Gastrocnemius medialis (tissue), 4 donors: ENCODE measurements at regions of chr12 and their contacts with region 1.

Region 1: DNA sequence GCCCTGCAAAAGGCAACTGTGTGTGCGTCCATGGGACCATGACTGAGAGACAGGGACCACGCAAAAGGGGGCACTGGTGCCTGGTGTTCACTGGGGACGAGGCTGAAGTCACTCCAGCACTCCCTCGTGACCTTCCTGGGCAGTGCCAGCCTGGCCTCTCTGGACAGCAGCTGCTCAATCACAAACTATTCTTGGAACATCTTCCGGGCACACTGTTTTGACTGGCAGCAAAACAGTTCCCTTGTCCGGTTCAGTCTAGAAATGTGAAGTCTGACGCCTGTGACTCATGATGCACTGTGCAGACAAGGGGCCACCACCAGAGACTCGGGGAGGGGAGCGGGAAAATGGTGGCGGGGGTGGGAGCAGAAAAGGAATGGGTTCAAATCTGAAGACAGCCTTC is 20.8 kb downstream of the SNRNP35 start:
- DNase-seq: peak; percentile 91 to 95
- ATAC-seq: peak; percentile 83 to 87
- H3K4me3 ChIP-seq: peak overlapping the region; percentile 17 to 45 (median 30)
- H3K27ac ChIP-seq: peak overlapping the region; percentile 96 to 99 (median 98)
- H3K4me1 ChIP-seq: peaks cover 38 to 48% of the 10 kb centered on the region in 2 donors
- H3K27me3 ChIP-seq: no peaks in the 10 kb centered on the region
- CTCF ChIP-seq: peak in 1 of 5 experiments; percentile 10
- POLR2A ChIP-seq: peak; percentile 26 to 47

Region 2: DNA sequence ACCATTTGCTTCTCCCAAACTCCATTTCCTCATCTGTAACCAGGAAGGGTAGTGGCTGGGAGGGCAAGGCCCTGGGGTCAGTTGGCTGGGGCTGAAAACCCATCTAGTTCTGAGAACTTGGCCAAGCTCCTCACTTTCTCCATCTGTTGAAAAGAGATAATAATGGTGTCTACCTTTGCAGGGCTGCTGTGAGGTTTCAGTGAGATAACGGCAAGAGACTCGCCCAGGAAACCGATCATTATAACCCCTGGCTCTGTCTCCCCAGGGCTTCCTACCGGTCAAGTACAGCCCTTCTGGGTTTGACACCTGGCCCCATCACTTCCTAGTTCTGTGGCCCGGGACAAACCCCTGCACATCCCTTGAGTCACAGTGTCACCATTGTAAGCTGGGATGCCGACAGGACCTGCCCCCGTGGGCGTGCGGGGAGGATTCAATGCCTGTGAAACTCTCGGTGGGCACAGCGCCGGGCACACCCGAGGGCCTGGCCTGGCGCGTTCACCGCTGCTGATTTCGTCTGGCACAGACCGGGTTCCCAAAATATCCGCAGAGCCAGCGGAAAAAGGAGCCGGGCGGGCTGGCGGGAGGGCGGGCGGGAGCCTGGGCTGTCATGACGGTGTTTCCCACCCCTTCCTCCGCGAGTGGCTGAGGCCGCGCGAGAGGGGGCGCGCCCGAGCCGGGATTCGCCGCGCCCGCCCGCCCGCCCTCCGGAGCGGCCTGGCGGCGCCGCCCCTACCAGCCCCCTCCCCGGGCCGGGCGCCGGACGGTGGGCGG is 90.4 kb before region 1 on chr12:
- in situ Hi-C with region 1: no loop called
- intact Hi-C with region 1: loop called (anchors 2 kb)
- DNase-seq: peak; percentile 63 to 77
- ATAC-seq: peak; percentile 57 to 61
- H3K4me3 ChIP-seq: peak overlapping the region; percentile 63 to 74 (median 66)
- H3K27ac ChIP-seq: peak overlapping the region; percentile 86 to 96 (median 94)
- H3K4me1 ChIP-seq: peaks cover 46 to 51% of the 10 kb centered on the region in 2 donors
- H3K27me3 ChIP-seq: no peaks in the 10 kb centered on the region
- CTCF ChIP-seq: no peak
- POLR2A ChIP-seq: peak in 1 of 2 donors; percentile 8